Activated CD4-positive, alpha-beta T cell treated with anti-CD3 and anti-CD28 coated beads for 36 hours (primary cell): ENCODE measurements at regions of chr7 and their contacts with region 1.

Region 1: GRCh38 chr7:143408686-143409561 is at the start of gene EPHA1:
- DNase-seq: peak; percentile 63
- ATAC-seq: peak; percentile 69
- H3K4me3 Mint-ChIP-seq: peak within 1 kb of the TSS; percentile 72
- H3K27ac Mint-ChIP-seq: peak within 1 kb of the TSS; percentile 68
- H3K4me1 Mint-ChIP-seq: peaks cover 54% of the 10 kb centered on the region
- H3K27me3 Mint-ChIP-seq: no peaks in the 10 kb centered on the region
- total RNA-seq, gene EPHA1: 2.4 to 2.8 TPM

Region 2: DNA sequence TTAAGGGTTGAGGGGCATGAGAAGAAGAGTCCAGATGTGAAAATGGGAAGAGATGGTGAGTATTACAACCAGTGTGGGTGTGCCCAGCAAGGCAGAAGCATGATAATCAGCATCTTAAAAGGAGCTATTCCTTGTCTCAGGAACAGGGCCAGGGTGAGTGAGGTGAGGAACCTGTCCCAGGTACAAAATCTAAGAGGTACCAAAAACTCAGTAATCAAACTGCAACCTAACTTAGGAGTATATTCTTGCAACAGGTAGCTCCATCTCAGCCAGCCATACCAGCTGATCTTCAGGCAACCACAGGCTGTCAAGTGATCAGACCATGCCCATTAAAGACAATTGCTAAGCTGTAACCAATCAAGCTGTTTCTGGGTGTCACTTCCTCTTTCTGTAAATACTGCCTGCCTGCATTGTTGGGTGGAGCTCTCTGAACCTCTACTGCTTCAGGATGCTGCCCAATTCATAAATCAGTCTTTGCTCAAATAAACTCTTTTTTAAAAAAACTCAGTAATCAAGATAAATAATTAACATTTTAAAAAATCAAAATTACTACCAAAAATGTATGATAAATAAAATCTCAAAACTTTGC is 454.1 kb before region 1 on chr7:
- CTCF ChIA-PET with region 1: no interaction called
- POLR2A ChIA-PET with region 1: no interaction called
- intact Hi-C with region 1: no loop called
- DNase-seq: no peak
- ATAC-seq: no peak
- H3K4me3 Mint-ChIP-seq: no peak overlapping the region
- H3K27ac Mint-ChIP-seq: no peak overlapping the region
- H3K4me1 Mint-ChIP-seq: no peaks in the 10 kb centered on the region
- H3K27me3 Mint-ChIP-seq: peaks cover 10% of the 10 kb centered on the region

Region 3: DNA sequence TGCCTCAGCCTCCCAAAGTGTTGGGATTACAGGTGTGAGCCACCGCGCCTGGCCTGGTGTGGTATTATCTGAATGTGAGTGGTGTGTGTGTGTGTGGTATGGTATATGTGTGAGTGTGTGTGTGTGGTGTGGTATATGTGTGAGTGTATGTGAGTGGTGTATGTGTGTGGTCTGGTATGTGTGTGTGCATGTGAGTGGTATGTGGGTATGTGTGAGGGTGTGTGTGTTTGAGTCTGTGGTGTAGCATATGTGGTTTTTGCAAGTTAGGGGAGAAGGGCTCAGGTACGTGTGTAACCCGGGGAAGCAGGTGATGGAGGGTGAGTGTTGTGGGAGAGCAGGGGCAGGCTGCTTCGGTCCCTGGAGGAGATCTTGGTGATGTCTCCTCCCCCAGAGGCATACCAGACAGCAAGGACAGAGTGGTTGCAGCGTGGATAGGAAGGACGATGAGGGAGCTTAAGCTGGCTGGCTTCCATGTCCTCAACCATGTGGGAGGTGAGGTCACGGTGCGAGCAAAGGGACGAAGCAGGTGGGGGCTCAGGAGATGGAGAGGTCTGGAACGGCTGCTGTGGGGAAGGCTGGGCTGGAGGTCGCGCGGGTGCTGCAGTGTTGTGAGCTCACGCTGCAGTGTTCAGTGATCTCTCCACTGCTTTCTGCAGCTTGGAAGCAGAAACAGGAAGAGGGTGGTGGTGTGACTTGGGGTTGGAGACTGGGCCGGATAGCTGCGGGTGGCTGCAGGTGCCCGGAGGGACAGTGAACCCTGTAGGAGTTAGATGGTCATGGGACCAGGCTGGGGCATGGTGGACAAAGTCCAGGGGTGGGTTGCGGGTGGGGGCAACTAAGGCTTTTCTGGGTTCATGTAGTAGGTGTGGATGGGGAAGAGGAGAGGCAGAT is 22.8 kb before region 1 on chr7:
- CTCF ChIA-PET with region 1: interaction called, 4 read pairs
- POLR2A ChIA-PET with region 1: interaction called, 7 read pairs
- intact Hi-C with region 1: loop called (anchors 1 to 2 kb)
- DNase-seq: peak; percentile 56
- ATAC-seq: peak; percentile 57
- H3K4me3 Mint-ChIP-seq: no peak overlapping the region
- H3K27ac Mint-ChIP-seq: no peak overlapping the region
- H3K4me1 Mint-ChIP-seq: peaks cover 11% of the 10 kb centered on the region
- H3K27me3 Mint-ChIP-seq: no peaks in the 10 kb centered on the region

Region 4: GRCh38 chr7:143391462-143392404 is 17.2 kb before region 1 on chr7:
- CTCF ChIA-PET with region 1: interaction called, 11 read pairs
- POLR2A ChIA-PET with region 1: no interaction called
- intact Hi-C with region 1: loop called in 1 of 2 experiments (anchors 1 kb)
- DNase-seq: no peak
- ATAC-seq: no peak
- H3K4me3 Mint-ChIP-seq: no peak overlapping the region
- H3K27ac Mint-ChIP-seq: no peak overlapping the region
- H3K4me1 Mint-ChIP-seq: peaks cover 17% of the 10 kb centered on the region
- H3K27me3 Mint-ChIP-seq: no peaks in the 10 kb centered on the region

Region 5: GRCh38 chr7:143436325-143436946 is 27.5 kb after region 1 on chr7:
- CTCF ChIA-PET with region 1: interaction called, 3 read pairs
- POLR2A ChIA-PET with region 1: interaction called, 12 read pairs
- intact Hi-C with region 1: no loop called
- DNase-seq: no peak
- ATAC-seq: no peak
- H3K4me3 Mint-ChIP-seq: no peak overlapping the region
- H3K27ac Mint-ChIP-seq: no peak overlapping the region
- H3K4me1 Mint-ChIP-seq: peaks cover 28% of the 10 kb centered on the region
- H3K27me3 Mint-ChIP-seq: no peaks in the 10 kb centered on the region

Region 6: GRCh38 chr7:144105211-144105610 is 696.3 kb after region 1 on chr7:
- CTCF ChIA-PET with region 1: no interaction called
- POLR2A ChIA-PET with region 1: no interaction called
- intact Hi-C with region 1: no loop called
- DNase-seq: no peak
- ATAC-seq: no peak
- H3K4me3 Mint-ChIP-seq: no peak overlapping the region
- H3K27ac Mint-ChIP-seq: no peak overlapping the region
- H3K4me1 Mint-ChIP-seq: peaks cover 9% of the 10 kb centered on the region
- H3K27me3 Mint-ChIP-seq: peaks cover 4% of the 10 kb centered on the region